ENCODE measurements at regions of chr19 and their contacts with region 1.

Region 1: GRCh38 chr19:40055832-40056504 is at the start of gene ZNF780B:
- DNase-seq: peak; percentile 43 to 82 (median 66)
- ATAC-seq: peak; percentile 92 to 93
- H3K4me3 Mint-ChIP-seq: peak within 1 kb of the TSS; percentile 97 to 100 (median 99)
- H3K27ac Mint-ChIP-seq: peak within 1 kb of the TSS; percentile 95 to 99 (median 99)
- H3K4me1 Mint-ChIP-seq: peaks cover 32 to 55% (median 51%) of the 10 kb centered on the region in 4 donors
- H3K27me3 Mint-ChIP-seq: peaks cover 0 to 12% (median 5%) of the 10 kb centered on the region in 5 donors
- polyA plus RNA-seq, gene ZNF780B: 13.3 to 18.4 (median 15.4) TPM

Region 2: DNA sequence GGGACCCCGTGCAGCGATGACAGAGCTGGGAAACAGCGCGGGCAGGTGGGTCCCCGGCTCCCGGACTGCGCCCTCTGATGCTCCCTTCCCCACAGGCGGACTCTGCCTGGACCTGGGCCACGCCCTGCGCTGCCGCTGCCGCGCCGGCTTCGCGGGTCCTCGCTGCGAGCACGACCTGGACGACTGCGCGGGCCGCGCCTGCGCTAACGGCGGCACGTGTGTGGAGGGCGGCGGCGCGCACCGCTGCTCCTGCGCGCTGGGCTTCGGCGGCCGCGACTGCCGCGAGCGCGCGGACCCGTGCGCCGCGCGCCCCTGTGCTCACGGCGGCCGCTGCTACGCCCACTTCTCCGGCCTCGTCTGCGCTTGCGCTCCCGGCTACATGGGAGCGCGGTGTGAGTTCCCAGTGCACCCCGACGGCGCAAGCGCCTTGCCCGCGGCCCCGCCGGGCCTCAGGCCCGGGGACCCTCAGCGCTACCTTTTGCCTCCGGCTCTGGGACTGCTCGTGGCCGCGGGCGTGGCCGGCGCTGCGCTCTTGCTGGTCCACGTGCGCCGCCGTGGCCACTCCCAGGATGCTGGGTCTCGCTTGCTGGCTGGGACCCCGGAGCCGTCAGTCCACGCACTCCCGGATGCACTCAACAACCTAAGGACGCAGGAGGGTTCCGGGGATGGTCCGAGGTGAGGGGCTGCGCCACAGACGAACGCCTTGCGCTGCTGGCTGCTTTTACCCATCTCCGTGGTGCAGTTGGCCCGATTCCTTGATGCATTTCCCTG is 548.8 kb before region 1 on chr19:
- POLR2A ChIA-PET with region 1: interaction called, 10 read pairs
- DNase-seq: peak; percentile 18 to 74 (median 54)
- ATAC-seq: peak; percentile 68 to 72
- H3K4me3 Mint-ChIP-seq: peak overlapping the region; percentile 78 to 89 (median 82)
- H3K27ac Mint-ChIP-seq: peak overlapping the region in 4 of 10 donors; percentile 47 to 86 (median 60)
- H3K4me1 Mint-ChIP-seq: peaks cover 19 to 38% (median 28%) of the 10 kb centered on the region in 4 donors
- H3K27me3 Mint-ChIP-seq: peaks cover 10 to 63% (median 39%) of the 10 kb centered on the region in 5 donors

Region 3: GRCh38 chr19:40090241-40091204 is 34.6 kb after region 1 on chr19 and contains the start of gene ZNF780A:
- POLR2A ChIA-PET with region 1: interaction called, 18 read pairs
- DNase-seq: peak; percentile 61 to 85 (median 78)
- ATAC-seq: peak; percentile 90 to 95
- H3K4me3 Mint-ChIP-seq: peak within 1 kb of the TSS; percentile 99 to 100 (median 100)
- H3K27ac Mint-ChIP-seq: peak within 1 kb of the TSS; percentile 99 to 100 (median 100)
- H3K4me1 Mint-ChIP-seq: peaks cover 26 to 49% (median 47%) of the 10 kb centered on the region in 4 donors
- H3K27me3 Mint-ChIP-seq: peaks cover 2 to 15% (median 6%) of the 10 kb centered on the region in 5 donors
- polyA plus RNA-seq, gene ZNF780A: 22.8 to 28.3 (median 26.9) TPM

Measured in naive thymus-derived CD8-positive, alpha-beta T cell (primary cell).